Heart right ventricle (tissue), 16 donors: ENCODE measurements at regions of chr5 and their contacts with region 1.

Region 1: GRCh38 chr5:60944904-60945812 is at the starts of genes ERCC8 and NDUFAF2:
- DNase-seq: peak; percentile 85 to 92
- ATAC-seq: peak; percentile 99 to 100 (median 100)
- H3K4me3 ChIP-seq: peak within 1 kb of the TSS; percentile 62 to 88 (median 74)
- H3K27ac ChIP-seq: peak within 1 kb of the TSS; percentile 23 to 86 (median 81)
- H3K4me1 ChIP-seq: peaks cover 6 to 32% (median 23%) of the 10 kb centered on the region in 9 donors
- H3K27me3 ChIP-seq: no peaks in the 10 kb centered on the region
- CTCF ChIP-seq: no peak
- total RNA-seq, gene ERCC8: 4.1 to 8.3 (median 6.8) TPM
- total RNA-seq, gene NDUFAF2: 23.0 to 49.2 (median 29.9) TPM

Region 2: DNA sequence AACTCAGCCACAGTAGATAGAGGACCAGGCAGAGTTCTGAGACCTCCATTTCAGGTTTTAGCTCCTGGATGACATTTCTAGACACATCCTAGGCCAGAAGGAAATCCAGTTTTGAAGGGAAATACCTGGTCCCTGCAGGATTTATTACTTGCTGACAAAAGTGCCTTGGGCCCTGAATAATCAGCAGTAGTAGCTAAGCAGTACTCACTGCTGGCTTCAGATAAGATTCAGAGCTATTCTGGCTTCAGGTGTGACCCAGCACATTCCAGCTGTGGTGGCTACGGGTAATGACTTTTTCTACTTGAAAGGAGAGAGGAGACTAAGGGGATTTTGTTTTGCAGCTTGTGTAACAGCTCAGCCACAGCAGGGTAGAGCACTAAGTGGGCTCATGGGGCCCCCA is 33.8 kb after region 1 on chr5:
- intact Hi-C with region 1: loop called in 1 of 10 experiments (anchors 2 kb)
- DNase-seq: no peak
- ATAC-seq: peak in 1 of 8 donors; percentile 22
- H3K4me3 ChIP-seq: no peak overlapping the region
- H3K27ac ChIP-seq: no peak overlapping the region
- H3K4me1 ChIP-seq: peaks cover 0 to 19% (median 4%) of the 10 kb centered on the region in 9 donors
- H3K27me3 ChIP-seq: no peaks in the 10 kb centered on the region
- CTCF ChIP-seq: no peak